PC-9 (cell line): ENCODE measurements at regions of chrX and their contacts with region 1.

Region 1: GRCh38 chrX:10039821-10040793 is 72.9 kb downstream of the CLDN34 start:
- DNase-seq: no peak
- H3K4me3 ChIP-seq: no peak overlapping the region
- H3K27ac ChIP-seq: peak overlapping the region; percentile 53
- H3K4me1 ChIP-seq: peaks cover 11% of the 10 kb centered on the region
- H3K27me3 ChIP-seq: no peaks in the 10 kb centered on the region
- CTCF ChIP-seq: no peak

Region 2: DNA sequence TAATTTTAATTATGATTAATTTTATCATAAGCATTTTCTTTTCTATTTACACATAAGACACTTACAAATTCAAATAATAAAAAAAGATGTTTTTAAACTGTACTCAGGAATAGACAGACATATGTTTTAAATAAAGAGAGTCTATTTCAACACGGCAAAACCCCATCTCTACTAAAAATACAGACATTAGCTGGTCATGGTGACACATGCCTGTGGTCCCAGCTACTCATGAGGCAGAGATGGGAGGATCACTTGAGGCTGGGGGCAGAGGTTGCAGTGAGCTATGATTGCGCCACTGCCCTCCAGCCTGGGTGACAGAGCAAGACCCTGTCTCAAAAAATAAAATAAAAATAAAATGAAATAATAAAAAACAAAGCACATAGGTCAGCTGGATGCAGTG is 1021.0 kb before region 1 on chrX:
- CTCF ChIA-PET with region 1: interaction called, 12 read pairs
- POLR2A ChIA-PET with region 1: no interaction called
- intact Hi-C with region 1: no loop called
- DNase-seq: no peak
- H3K4me3 ChIP-seq: no peak overlapping the region
- H3K27ac ChIP-seq: no peak overlapping the region
- H3K4me1 ChIP-seq: no peaks in the 10 kb centered on the region
- H3K27me3 ChIP-seq: no peaks in the 10 kb centered on the region
- CTCF ChIP-seq: no peak